ENCODE measurements at regions of chr3 and their contacts with region 1.

Region 1: DNA sequence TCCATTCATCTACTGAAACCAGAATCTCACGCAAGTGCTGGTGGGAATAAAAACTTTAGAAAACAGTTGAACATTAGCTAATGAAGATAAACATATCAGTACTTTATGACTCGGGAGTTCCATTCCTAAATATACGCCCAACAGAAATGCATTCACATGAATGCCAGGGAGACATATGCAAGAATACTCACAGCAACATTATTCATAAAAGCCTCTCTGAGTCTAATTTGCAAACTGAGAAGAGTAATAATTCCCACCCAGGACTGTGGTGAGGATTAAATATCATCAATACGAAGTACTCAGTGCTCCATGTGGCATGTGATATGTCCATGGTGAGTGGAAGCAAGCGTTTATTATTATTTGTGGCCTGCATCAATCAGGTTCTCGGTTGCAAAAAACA is 65.6 kb upstream of the OXTR start:
- DNase-seq: no peak
- H3K4me3 ChIP-seq: no peak overlapping the region
- CTCF ChIP-seq: no peak

Region 2: DNA sequence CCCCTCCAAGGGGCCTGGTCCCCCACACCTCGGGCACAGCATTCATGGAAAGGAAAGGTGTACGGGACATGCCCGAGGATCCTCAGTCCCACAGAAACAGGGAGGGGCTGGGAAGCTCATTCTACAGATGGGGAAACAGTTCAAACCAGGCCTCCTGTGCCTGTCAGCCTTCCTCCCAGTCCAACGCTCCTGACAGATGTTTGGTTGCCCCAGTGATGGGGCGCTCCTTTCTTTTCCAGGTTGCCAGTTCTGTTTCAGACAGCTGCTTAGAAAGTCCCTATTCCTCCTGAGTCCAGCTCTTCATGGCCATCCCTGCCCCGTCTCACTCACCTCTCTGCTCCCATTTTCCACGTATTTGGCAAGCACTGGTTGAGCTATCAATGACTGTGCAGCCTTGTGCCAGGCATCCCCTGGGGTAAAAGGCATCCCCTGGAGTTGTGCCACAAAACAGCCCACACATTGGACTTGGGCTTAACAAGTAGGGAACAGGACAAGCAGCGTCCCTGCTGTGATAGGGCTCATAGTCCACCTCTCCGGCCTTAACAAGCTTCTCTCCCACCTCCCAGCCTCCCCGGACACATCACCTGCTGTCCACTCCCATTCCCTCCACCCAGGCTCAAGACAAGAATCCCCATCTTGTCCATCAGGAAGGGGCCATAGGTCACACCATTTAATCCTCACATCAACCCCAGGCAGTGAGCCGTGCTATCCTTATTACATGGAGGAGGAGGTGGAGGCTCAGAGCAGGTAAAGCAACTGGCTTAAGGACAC is 72.2 kb before region 1 on chr3:
- in situ Hi-C with region 1: loop called (anchors 5 kb)
- DNase-seq: no peak
- H3K4me3 ChIP-seq: no peak overlapping the region
- CTCF ChIP-seq: no peak

Region 3: GRCh38 chr3:8776406-8776805 is 58.6 kb before region 1 on chr3:
- in situ Hi-C with region 1: no loop called
- DNase-seq: no peak
- H3K4me3 ChIP-seq: no peak overlapping the region
- CTCF ChIP-seq: no peak